Common myeloid progenitor, CD34-positive (primary cell): ENCODE measurements at regions of chr14 and their contacts with region 1.

Region 1: DNA sequence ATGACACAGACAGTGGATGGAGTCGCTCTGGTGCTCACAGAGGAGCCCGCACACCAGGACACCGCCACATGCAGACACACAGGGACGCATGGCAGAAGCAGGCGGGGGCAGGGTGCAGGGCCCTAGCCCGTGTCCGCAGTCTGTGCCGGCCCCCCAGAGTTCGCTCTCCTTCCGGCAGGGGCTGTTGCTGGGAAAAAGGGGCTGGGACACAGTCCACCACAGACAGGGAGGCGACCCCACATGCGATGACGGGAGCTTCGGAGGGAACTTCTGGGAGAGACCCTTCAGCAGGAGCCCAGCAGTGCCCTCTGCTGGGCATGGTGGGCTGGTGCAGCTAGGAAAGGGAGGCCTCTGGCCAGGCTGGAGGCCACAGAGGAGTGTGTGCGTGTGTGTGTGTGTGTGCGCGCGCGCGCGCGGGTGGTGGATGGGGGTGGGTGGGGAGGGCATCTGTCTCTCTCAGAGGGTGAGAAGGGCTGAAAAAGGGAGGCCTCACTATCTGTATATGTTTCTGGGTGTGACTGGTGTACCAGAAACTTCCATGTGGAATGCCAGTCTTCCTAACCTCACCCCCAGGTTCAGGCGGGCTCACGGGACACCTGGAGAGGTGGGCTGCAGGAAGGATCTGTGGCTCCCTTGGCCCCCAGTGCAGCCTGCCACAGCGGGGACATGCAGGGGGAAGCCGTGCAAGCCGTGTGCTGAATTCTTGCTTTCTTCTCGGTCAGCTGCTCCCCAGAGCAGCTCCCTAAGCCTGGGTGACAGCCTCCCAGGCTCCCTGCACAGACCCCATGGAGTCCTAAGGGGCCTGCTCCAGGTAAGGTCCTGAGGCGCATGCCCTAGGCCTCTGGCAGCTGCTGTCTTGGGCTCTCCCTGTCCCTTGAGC is 60.7 kb downstream of the PLEKHG3 start:
- DNase-seq: peak; percentile 65 to 78 (median 68)
- H3K4me3 ChIP-seq: peak overlapping the region in 3 of 7 experiments; percentile 41 to 64 (median 52)
- H3K27ac ChIP-seq: no peak overlapping the region
- H3K4me1 ChIP-seq: peaks cover 0 to 41% (median 27%) of the 10 kb centered on the region in 4 experiments
- H3K27me3 ChIP-seq: peaks cover 0 to 21% (median 0%) of the 10 kb centered on the region in 5 experiments

Region 2: DNA sequence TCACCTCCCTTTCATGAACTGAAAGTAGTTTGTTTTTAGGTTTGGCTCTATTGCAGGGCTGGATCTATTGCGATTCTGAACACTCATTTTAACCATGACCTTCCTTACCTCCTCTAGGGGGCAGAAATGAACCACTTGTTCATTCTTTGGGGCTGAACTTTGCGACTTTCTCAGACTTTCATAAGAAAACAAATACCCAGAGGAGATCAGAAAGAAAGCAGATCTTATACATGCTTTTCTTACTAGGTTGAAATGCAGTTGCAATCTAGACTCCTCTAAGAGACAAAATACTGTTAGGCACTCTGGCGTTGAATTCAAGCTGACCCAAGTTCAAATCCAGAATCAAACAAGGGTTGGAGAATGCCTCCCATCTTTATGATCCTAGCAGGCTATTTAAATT is 93.3 kb before region 1 on chr14:
- CTCF ChIA-PET with region 1: interaction called, 80 read pairs
- POLR2A ChIA-PET with region 1: interaction called, 3 read pairs
- DNase-seq: peak; percentile 68 to 88 (median 83)
- H3K4me3 ChIP-seq: no peak overlapping the region
- H3K27ac ChIP-seq: no peak overlapping the region
- H3K4me1 ChIP-seq: peaks cover 5 to 35% (median 13%) of the 10 kb centered on the region in 4 experiments
- H3K27me3 ChIP-seq: peaks cover 0 to 5% (median 0%) of the 10 kb centered on the region in 5 experiments

Region 3: GRCh38 chr14:64688811-64689281 is 76.0 kb before region 1 on chr14:
- CTCF ChIA-PET with region 1: interaction called, 12 read pairs
- POLR2A ChIA-PET with region 1: no interaction called
- DNase-seq: peak in 1 of 3 donors; percentile 30
- H3K4me3 ChIP-seq: no peak overlapping the region
- H3K27ac ChIP-seq: no peak overlapping the region
- H3K4me1 ChIP-seq: peaks cover 5 to 47% (median 11%) of the 10 kb centered on the region in 4 experiments
- H3K27me3 ChIP-seq: peaks cover 0 to 22% (median 6%) of the 10 kb centered on the region in 5 experiments

Region 4: GRCh38 chr14:64708148-64709004 is 56.5 kb before region 1 on chr14:
- CTCF ChIA-PET with region 1: interaction called, 20 read pairs
- POLR2A ChIA-PET with region 1: no interaction called
- DNase-seq: peak; percentile 59 to 90 (median 84)
- H3K4me3 ChIP-seq: peak overlapping the region in 4 of 7 experiments; percentile 25 to 58 (median 36)
- H3K27ac ChIP-seq: no peak overlapping the region
- H3K4me1 ChIP-seq: peaks cover 25 to 74% (median 54%) of the 10 kb centered on the region in 4 experiments
- H3K27me3 ChIP-seq: peaks cover 0 to 36% (median 9%) of the 10 kb centered on the region in 5 experiments

Region 5: GRCh38 chr14:64748995-64749763 is 15.7 kb before region 1 on chr14:
- CTCF ChIA-PET with region 1: interaction called, 16 read pairs
- POLR2A ChIA-PET with region 1: no interaction called
- DNase-seq: no peak
- H3K4me3 ChIP-seq: no peak overlapping the region
- H3K27ac ChIP-seq: no peak overlapping the region
- H3K4me1 ChIP-seq: no peaks in the 10 kb centered on the region
- H3K27me3 ChIP-seq: peaks cover 0 to 4% (median 0%) of the 10 kb centered on the region in 5 experiments